HEK293 (cell line): ENCODE measurements at regions of chr5 and their contacts with region 1.

Region 1: DNA sequence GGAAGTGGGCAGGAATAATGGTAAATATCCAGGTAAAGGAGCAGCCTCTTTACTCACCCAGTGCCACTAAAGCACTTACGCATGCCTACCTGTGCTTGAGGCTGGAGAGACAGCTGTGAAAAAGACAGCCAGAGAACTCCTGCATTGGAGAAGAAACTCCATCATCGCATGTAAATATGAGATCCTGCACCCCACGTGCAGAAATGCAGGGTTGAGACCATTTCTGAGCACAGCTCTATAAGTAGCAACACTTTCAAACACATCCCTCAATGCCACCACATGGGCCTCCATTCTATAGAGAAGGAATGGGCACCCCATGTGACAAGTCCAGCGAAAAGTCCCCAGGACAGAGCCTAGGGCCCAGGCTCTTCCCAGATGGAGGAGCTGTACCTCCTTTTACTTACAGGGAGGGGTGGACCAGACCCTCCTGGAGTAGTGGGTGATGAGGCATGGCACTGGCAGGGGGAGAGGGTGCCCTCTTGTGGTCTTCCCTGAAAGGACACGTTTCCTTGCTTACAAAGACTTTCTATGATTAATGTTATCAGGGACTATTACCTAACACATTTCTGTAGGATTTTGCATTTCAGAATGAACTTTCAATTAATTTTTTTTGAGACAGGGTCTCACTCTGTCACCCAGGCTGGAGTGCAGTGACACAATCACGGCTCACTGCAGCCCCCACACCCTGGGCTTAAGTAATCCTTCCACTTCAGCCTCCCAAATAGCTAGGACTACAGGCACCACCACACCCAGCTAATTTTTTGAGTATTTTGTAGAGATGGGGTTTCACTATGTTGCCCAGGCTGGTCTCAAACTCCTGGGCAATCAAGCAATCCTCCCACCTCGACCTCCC is 55.3 kb upstream of the IL17B start:
- H3K4me3 ChIP-seq: no peak overlapping the region
- H3K27ac ChIP-seq: no peak overlapping the region
- H3K4me1 ChIP-seq: no peaks in the 10 kb centered on the region
- CTCF ChIP-seq: peak; percentile 83

Region 2: GRCh38 chr5:149162401-149163084 is 271.8 kb before region 1 on chr5:
- CTCF ChIA-PET with region 1: no interaction called
- POLR2A ChIA-PET with region 1: no interaction called
- H3K4me3 ChIP-seq: no peak overlapping the region
- H3K27ac ChIP-seq: no peak overlapping the region
- H3K4me1 ChIP-seq: no peaks in the 10 kb centered on the region
- CTCF ChIP-seq: no peak

Region 3: GRCh38 chr5:149254506-149254905 is 179.9 kb before region 1 on chr5:
- CTCF ChIA-PET with region 1: no interaction called
- POLR2A ChIA-PET with region 1: no interaction called
- H3K4me3 ChIP-seq: no peak overlapping the region
- H3K27ac ChIP-seq: no peak overlapping the region
- H3K4me1 ChIP-seq: no peaks in the 10 kb centered on the region
- CTCF ChIP-seq: no peak

Region 4: DNA sequence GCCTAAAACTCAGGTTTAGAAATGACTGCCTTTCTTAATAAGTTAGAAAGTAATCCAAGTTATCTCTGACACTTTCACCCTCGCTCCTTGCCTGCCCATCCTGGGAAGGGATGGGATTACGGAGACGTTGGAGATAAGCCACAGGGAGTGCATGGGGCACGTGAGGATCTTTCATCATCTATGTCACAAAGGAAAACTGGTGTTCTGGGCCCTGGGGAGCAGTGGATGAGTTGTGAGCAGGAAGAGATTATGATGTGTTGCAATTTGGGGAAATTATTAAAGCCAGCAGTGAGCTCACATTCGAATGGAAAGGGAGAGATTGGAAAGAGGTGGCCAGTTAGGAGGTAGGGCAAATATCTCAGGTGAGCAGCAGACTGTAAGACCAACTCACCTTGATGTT is 149.9 kb before region 1 on chr5:
- CTCF ChIA-PET with region 1: no interaction called
- POLR2A ChIA-PET with region 1: no interaction called
- H3K4me3 ChIP-seq: no peak overlapping the region
- H3K27ac ChIP-seq: no peak overlapping the region
- H3K4me1 ChIP-seq: no peaks in the 10 kb centered on the region
- CTCF ChIP-seq: no peak

Region 5: DNA sequence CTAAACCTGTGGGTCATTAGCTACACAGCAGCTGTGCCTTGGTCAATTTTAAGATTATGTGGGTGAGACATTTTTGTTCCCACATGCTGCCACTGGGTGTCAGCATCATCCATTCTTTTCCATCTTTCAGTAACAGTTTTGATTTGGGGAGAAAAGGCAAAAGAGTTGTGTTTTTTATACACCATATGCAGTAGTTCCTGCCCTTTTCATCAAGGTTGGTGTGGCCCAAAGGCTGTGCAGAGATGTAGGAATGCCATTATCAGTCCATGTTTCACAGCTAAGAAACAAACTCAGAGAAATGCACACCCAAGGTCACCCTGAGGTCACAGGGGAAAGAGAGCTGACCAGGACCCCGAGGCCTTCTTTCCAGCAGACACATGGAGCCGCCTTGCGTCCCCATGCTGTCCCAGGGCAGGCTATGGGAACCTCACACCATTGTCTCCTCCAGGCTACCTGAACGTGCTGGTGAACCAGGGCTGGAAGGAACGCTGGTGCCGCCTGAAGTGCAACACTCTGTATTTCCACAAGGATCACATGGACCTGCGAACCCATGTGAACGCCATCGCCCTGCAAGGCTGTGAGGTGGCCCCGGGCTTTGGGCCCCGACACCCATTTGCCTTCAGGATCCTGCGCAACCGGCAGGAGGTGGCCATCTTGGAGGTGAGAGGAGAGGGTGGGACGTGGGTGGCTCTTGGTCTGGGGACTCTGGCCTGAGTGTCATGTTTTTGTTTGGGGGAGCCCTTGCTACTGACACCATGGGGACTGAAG is 116.9 kb before region 1 on chr5:
- CTCF ChIA-PET with region 1: interaction called, 47 read pairs
- POLR2A ChIA-PET with region 1: no interaction called
- H3K4me3 ChIP-seq: no peak overlapping the region
- H3K27ac ChIP-seq: no peak overlapping the region
- H3K4me1 ChIP-seq: peaks cover 8% of the 10 kb centered on the region; the same call in 1 of the 2 replicates
- CTCF ChIP-seq: peak; percentile 59; the same call in 1 of the 2 replicates

Region 6: GRCh38 chr5:149381987-149382340 is 52.4 kb before region 1 on chr5:
- CTCF ChIA-PET with region 1: interaction called, 205 read pairs
- POLR2A ChIA-PET with region 1: no interaction called
- H3K4me3 ChIP-seq: no peak overlapping the region
- H3K27ac ChIP-seq: no peak overlapping the region
- H3K4me1 ChIP-seq: no peaks in the 10 kb centered on the region
- CTCF ChIP-seq: peak; percentile 89

Region 7: DNA sequence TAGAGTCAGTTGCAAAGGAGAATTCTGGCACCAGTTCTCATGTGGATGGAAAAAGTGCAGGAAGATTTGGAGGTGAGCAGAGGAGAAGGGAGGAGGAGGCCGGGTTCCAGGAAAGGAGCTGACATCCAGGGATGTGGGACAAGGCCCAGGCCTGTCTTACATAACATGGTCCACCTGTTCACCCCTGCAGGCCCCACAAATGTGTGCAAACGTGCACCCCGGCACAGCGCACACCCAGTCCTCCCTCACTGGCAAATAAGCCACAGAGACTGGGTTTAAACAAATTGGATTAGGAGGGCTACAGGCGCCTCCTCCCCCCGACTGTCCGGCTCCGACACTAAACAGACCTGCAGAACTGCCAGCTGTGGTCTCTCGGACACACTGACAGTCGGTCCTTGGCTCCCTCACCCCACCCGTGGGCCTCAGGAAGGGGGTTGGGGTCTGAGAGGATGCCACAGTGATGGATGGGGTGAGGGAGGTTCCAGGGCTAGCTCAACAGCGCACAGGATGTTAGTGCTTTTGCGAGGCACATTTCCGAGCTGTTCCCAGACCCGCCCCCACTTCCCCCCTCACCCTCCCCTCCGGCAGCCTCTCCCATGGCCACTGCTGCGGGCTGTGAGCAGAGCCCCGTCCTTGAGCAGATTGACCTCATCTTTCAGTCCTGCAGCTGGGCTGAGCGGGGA is 11.9 kb before region 1 on chr5:
- CTCF ChIA-PET with region 1: interaction called, 20 read pairs
- POLR2A ChIA-PET with region 1: no interaction called
- H3K4me3 ChIP-seq: no peak overlapping the region
- H3K27ac ChIP-seq: no peak overlapping the region
- H3K4me1 ChIP-seq: no peaks in the 10 kb centered on the region
- CTCF ChIP-seq: no peak

Region 8: GRCh38 chr5:149561848-149562247 is 127.5 kb after region 1 on chr5:
- CTCF ChIA-PET with region 1: interaction called, 54 read pairs
- POLR2A ChIA-PET with region 1: no interaction called
- H3K4me3 ChIP-seq: no peak overlapping the region
- H3K27ac ChIP-seq: no peak overlapping the region; the same call in 1 of the 2 replicates
- H3K4me1 ChIP-seq: peaks cover 8% of the 10 kb centered on the region; the same call in 1 of the 2 replicates
- CTCF ChIP-seq: no peak